PC-9 (cell line): ENCODE measurements at regions of chr2 and their contacts with region 1.

Region 1: DNA sequence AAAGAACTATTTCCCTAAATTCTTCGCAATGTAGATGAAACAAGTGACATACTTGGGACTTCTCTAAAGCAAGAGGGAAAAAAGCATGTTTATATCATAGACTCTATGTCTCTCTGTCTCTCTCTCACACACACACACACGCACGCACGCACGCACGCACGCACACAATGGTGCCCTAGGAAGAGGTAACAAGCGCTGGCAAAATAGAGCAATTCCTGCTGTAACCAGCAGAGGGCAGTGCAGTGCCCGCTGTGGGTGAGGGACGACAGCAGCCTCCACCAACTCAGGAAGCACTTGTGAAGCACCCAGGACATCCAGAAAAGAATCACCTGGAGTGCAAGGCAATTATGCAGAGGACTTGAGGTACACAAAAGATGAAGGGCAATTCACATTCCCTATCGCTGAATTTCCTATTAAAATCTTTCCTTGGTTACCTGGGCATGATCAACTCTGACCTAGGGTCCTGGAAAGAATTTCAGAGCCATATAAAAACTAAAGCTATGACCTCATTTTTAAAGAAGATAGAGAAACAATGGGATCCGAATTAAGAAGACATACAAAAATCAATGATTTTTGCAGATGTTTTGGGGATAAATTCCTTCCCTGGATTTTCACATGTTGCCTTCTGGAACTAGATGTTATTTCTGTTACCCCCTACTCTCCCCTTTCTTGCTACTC is 166.4 kb downstream of the PDE11A start:
- DNase-seq: peak in 1 of 2 experiments; percentile 73
- H3K4me3 ChIP-seq: no peak overlapping the region
- H3K27ac ChIP-seq: no peak overlapping the region
- H3K4me1 ChIP-seq: no peaks in the 10 kb centered on the region; the same call in 1 of the 2 replicates
- H3K27me3 ChIP-seq: no peaks in the 10 kb centered on the region
- CTCF ChIP-seq: peak; percentile 95

Region 2: DNA sequence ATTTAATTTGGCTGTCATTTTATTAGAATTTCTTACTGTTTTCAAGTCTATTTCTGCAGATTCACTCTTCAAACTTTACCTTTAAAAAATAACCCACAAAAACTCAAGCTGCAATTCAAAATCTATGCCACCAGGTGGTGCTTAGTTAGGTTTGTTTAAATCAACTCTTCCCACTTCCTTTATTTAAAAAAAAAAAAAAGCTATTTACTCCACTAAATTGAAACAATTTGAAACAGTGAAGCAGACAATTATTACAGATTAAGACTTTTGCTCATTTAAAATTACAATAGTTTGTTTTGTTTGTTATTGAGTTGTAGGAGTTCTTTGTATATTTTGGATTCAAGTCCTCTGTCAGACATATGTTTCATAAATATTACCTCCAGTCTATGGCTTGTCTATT is 133.7 kb before region 1 on chr2:
- CTCF ChIA-PET with region 1: no interaction called
- POLR2A ChIA-PET with region 1: no interaction called
- intact Hi-C with region 1: loop called (anchors 2 kb)
- DNase-seq: no peak
- H3K4me3 ChIP-seq: no peak overlapping the region
- H3K27ac ChIP-seq: no peak overlapping the region
- H3K4me1 ChIP-seq: no peaks in the 10 kb centered on the region
- H3K27me3 ChIP-seq: no peaks in the 10 kb centered on the region
- CTCF ChIP-seq: peak; percentile 85

Region 3: DNA sequence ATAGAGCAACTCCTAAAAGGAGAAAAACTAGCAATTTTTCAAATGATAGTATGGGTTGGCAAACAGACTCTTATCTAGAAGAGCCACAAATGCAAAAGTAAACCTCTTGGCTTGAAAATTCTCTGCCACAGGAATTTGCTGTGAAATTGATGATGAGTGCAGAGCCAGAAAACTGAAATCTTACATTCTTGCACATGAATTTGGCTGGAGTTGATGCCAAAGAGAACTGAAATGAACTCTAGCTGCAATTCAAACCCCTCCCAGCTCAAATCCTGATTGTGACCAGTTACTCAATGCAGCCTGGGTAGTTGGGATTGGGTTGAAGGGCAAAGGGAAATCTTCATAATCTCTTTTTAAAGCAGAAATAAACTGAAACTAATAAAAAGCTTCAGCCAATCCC is 100.2 kb before region 1 on chr2:
- CTCF ChIA-PET with region 1: no interaction called
- POLR2A ChIA-PET with region 1: interaction called, 12 read pairs
- intact Hi-C with region 1: no loop called
- DNase-seq: no peak
- H3K4me3 ChIP-seq: no peak overlapping the region
- H3K27ac ChIP-seq: no peak overlapping the region
- H3K4me1 ChIP-seq: no peaks in the 10 kb centered on the region
- H3K27me3 ChIP-seq: no peaks in the 10 kb centered on the region
- CTCF ChIP-seq: no peak

Region 4: DNA sequence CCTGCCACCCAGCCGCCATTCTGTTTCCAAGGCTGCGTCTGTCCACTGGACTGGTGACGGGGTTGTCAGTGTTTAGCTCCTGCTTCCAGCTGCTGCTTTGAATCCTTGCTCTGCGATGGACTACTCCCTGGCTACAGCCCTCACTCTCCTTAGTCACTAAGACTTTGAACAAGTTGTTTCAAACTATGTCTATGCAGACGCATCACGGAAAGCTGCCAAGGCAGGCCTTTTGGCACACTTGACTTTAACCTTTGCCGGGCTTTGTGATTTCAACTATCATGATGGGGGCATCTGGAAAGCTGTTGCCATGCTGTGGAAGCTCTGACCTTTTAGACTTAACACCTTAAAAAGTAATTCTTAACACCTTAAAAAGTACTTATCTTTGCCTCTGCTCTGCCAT is 112.0 kb after region 1 on chr2:
- CTCF ChIA-PET with region 1: no interaction called
- POLR2A ChIA-PET with region 1: no interaction called
- intact Hi-C with region 1: no loop called
- DNase-seq: no peak
- H3K4me3 ChIP-seq: no peak overlapping the region
- H3K27ac ChIP-seq: no peak overlapping the region
- H3K4me1 ChIP-seq: no peaks in the 10 kb centered on the region
- H3K27me3 ChIP-seq: no peaks in the 10 kb centered on the region
- CTCF ChIP-seq: no peak